ENCODE measurements at regions of chr3 and their contacts with region 1.

Region 1: GRCh38 chr3:184145111-184145524 is 10.0 kb downstream of the EIF2B5 start:
- DNase-seq: peak; percentile 66
- ATAC-seq: peak; percentile 90
- H3K4me3 ChIP-seq: no peak overlapping the region
- H3K27ac ChIP-seq: no peak overlapping the region
- H3K4me1 ChIP-seq: no peaks in the 10 kb centered on the region
- H3K27me3 ChIP-seq: no peaks in the 10 kb centered on the region
- CTCF ChIP-seq: peak; percentile 45

Region 2: DNA sequence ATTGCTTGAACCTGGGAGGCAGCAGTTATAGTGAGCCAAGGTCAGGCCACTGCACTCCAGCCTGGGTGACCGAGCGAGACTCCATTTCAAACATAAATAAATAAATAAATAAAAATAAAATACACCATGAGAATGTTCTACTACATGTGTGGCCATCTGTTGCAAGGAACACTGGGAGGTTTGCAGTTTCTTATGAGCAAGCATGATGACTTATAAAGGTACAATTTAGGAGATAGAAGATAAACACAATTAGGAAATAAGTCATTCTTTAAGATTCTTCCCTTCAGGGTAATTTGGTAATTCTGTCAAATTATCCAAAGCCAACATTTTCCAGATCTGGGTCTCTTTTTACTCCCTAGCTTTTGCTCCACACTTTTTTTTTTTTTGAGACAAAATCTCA is 78.9 kb before region 1 on chr3:
- intact Hi-C with region 1: no loop called
- DNase-seq: no peak
- ATAC-seq: no peak
- H3K4me3 ChIP-seq: no peak overlapping the region
- H3K27ac ChIP-seq: no peak overlapping the region
- H3K4me1 ChIP-seq: no peaks in the 10 kb centered on the region
- H3K27me3 ChIP-seq: no peaks in the 10 kb centered on the region
- CTCF ChIP-seq: no peak

Region 3: DNA sequence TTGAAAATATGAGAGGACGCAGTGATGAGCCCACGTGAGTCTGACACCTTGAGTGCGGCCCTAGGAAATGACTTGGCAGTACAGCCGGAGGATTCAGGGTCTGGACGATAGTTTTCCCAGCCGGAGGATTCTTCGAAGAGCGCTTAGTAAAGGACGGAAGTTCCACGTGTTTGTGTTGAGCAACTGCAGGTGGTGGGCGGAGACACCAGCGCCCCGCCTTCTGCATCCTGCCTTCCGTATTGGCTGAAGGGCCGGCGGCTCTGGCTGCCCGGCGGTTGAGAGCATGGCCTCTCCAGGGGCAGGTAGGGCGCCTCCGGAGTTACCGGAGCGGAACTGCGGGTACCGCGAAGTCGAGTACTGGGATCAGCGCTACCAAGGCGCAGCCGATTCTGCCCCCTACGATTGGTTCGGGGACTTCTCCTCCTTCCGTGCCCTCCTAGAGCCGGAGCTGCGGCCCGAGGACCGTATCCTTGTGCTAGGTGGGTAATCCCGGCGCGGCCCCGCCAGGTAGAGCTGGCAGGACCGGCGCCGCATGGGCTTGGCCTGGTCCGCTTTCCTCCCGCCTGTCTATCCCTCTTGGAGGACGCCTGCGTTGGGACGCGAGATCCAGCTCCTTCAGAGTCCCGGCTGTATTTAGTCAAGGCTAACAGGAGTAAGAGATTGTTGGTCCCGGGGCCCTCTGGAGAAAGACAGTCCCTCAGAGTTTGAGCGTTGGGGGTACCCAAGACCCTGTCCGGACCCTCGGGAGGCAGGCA is 104.5 kb after region 1 on chr3 and contains the start of gene EEF1AKMT4:
- intact Hi-C with region 1: loop called (anchors 10 kb)
- DNase-seq: peak; percentile 98
- ATAC-seq: peak; percentile 97
- H3K4me3 ChIP-seq: peak within 1 kb of the TSS; percentile 91
- H3K27ac ChIP-seq: peak within 1 kb of the TSS; percentile 86
- H3K4me1 ChIP-seq: peaks cover 8% of the 10 kb centered on the region
- H3K27me3 ChIP-seq: no peaks in the 10 kb centered on the region
- CTCF ChIP-seq: peak; percentile 65
- total RNA-seq, gene EEF1AKMT4: 2.7 TPM